ENCODE measurements at regions of chr5 and their contacts with region 1.

Region 1: GRCh38 chr5:148443998-148444397 is 60.2 kb downstream of the FBXO38 start:
- DNase-seq: peak; percentile 87
- H3K4me3 Mint-ChIP-seq: no peak overlapping the region
- H3K27ac Mint-ChIP-seq: no peak overlapping the region
- H3K4me1 Mint-ChIP-seq: no peaks in the 10 kb centered on the region
- H3K27me3 Mint-ChIP-seq: no peaks in the 10 kb centered on the region
- CTCF ChIP-seq: peak; percentile 74

Region 2: GRCh38 chr5:147148715-147149114 is 1295.3 kb before region 1 on chr5:
- CTCF ChIA-PET with region 1: no interaction called
- POLR2A ChIA-PET with region 1: no interaction called
- intact Hi-C with region 1: no loop called
- DNase-seq: no peak
- H3K4me3 Mint-ChIP-seq: no peak overlapping the region
- H3K27ac Mint-ChIP-seq: no peak overlapping the region
- H3K4me1 Mint-ChIP-seq: no peaks in the 10 kb centered on the region
- H3K27me3 Mint-ChIP-seq: no peaks in the 10 kb centered on the region
- CTCF ChIP-seq: no peak

Region 3: DNA sequence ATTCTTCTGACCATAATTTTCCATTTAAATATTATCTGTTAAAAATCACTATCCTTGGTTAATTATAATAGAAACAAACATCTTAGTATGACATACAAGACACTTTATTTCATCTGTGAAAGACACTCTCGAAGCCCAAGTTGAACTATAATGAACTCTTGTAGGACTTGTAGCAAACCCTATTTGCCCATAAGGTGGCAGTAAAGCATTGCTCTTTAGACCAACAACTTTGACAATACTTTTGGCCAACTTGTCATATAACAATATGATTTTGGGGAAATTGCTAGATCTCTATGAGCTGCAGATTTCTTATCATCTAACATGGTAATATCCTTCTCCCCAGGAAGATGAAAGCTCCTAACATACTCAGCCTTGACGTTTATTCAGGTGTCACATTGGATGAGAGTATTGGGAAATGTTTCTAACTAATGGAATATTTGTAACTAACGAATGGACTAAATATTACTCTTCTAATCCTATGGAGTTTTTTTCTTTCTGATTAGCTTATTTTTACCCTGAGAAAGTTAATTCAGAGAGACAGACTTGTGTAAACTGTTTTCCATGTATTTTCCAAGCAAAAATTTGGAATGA is 264.7 kb before region 1 on chr5:
- CTCF ChIA-PET with region 1: interaction called, 22 read pairs
- POLR2A ChIA-PET with region 1: interaction called, 3 read pairs
- intact Hi-C with region 1: loop called (anchors 1 kb)
- DNase-seq: peak; percentile 84
- H3K4me3 Mint-ChIP-seq: no peak overlapping the region
- H3K27ac Mint-ChIP-seq: no peak overlapping the region
- H3K4me1 Mint-ChIP-seq: no peaks in the 10 kb centered on the region
- H3K27me3 Mint-ChIP-seq: peaks cover 7% of the 10 kb centered on the region
- CTCF ChIP-seq: peak; percentile 94

Region 4: GRCh38 chr5:148408092-148408491 is 35.9 kb before region 1 on chr5:
- CTCF ChIA-PET with region 1: interaction called, 15 read pairs
- POLR2A ChIA-PET with region 1: no interaction called
- intact Hi-C with region 1: no loop called
- DNase-seq: no peak
- H3K4me3 Mint-ChIP-seq: no peak overlapping the region
- H3K27ac Mint-ChIP-seq: no peak overlapping the region
- H3K4me1 Mint-ChIP-seq: peaks cover 9% of the 10 kb centered on the region
- H3K27me3 Mint-ChIP-seq: no peaks in the 10 kb centered on the region
- CTCF ChIP-seq: no peak

Region 5: DNA sequence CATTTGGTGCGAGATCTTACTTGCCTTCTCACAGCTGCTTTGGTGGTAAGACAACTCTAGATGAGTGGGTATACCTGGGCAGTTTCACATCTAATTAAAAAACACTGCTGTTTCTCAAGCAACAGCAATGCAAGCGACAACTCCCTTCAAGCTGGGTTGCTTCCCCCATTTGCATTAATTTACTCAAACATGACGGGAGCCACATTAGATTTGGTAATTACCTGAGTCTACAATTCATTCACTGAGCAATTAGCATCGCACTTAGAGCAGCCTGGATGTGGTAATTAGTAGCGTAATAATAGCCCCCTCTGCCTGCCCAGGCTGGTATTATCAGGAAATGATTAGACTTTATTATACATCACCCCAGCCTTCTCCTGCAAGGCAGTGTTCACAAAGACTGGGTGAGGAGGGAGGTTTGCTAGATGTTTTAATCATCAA is 13.2 kb after region 1 on chr5:
- CTCF ChIA-PET with region 1: interaction called, 29 read pairs
- POLR2A ChIA-PET with region 1: interaction called, 3 read pairs
- intact Hi-C with region 1: no loop called
- DNase-seq: peak; percentile 60
- H3K4me3 Mint-ChIP-seq: no peak overlapping the region
- H3K27ac Mint-ChIP-seq: no peak overlapping the region
- H3K4me1 Mint-ChIP-seq: no peaks in the 10 kb centered on the region
- H3K27me3 Mint-ChIP-seq: peaks cover 45% of the 10 kb centered on the region
- CTCF ChIP-seq: peak; percentile 52

Region 6: DNA sequence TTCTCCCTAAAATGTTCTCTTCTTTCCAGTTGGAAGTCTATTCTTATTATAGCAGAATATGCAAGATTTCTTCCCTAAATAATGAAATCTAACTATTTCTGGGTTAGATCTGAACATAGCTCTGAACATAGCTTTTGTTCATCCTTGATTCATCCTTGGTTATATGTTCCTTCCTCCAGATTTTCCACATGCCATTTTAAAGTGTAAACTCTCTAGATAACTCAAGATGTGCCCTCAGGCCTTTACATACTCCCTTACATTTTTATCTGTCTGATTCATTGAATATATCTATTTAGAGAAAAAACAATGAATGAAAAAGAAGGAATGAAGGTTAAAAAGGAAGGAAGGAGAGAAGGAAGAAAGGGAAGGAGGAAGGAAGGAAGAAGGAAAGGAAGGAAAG is 40.7 kb after region 1 on chr5:
- CTCF ChIA-PET with region 1: no interaction called
- POLR2A ChIA-PET with region 1: no interaction called
- intact Hi-C with region 1: no loop called
- DNase-seq: no peak
- H3K4me3 Mint-ChIP-seq: no peak overlapping the region
- H3K27ac Mint-ChIP-seq: no peak overlapping the region
- H3K4me1 Mint-ChIP-seq: peaks cover 10% of the 10 kb centered on the region
- H3K27me3 Mint-ChIP-seq: peaks cover 47% of the 10 kb centered on the region
- CTCF ChIP-seq: no peak

Region 7: GRCh38 chr5:148615644-148616275 is 171.8 kb after region 1 on chr5:
- CTCF ChIA-PET with region 1: no interaction called
- POLR2A ChIA-PET with region 1: no interaction called
- intact Hi-C with region 1: no loop called
- DNase-seq: peak; percentile 26
- H3K4me3 Mint-ChIP-seq: no peak overlapping the region
- H3K27ac Mint-ChIP-seq: no peak overlapping the region
- H3K4me1 Mint-ChIP-seq: peaks cover 6% of the 10 kb centered on the region
- H3K27me3 Mint-ChIP-seq: no peaks in the 10 kb centered on the region
- CTCF ChIP-seq: no peak

Region 8: DNA sequence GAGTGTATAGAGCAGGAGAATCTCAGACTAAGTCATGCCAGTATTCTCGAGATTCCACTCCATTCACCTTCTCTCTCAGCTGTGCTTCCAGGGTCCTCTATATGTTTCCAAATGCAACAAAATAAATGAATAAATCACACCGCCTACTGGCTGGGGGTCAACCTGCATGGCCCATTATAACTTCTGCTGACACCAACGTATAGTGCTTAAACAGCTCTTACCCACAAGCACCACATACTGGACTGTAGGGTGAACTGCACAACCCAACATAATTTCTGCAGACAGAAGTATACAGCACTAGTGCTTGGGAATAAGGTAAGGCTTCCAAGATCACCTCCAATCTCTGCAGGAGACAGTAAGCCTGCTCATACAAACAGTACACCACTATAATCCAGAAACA is 243.4 kb after region 1 on chr5:
- CTCF ChIA-PET with region 1: interaction called, 31 read pairs
- POLR2A ChIA-PET with region 1: no interaction called
- intact Hi-C with region 1: loop called (anchors 1 kb)
- DNase-seq: peak; percentile 78
- H3K4me3 Mint-ChIP-seq: no peak overlapping the region
- H3K27ac Mint-ChIP-seq: no peak overlapping the region
- H3K4me1 Mint-ChIP-seq: no peaks in the 10 kb centered on the region
- H3K27me3 Mint-ChIP-seq: peaks cover 21% of the 10 kb centered on the region
- CTCF ChIP-seq: peak; percentile 72

Region 9: DNA sequence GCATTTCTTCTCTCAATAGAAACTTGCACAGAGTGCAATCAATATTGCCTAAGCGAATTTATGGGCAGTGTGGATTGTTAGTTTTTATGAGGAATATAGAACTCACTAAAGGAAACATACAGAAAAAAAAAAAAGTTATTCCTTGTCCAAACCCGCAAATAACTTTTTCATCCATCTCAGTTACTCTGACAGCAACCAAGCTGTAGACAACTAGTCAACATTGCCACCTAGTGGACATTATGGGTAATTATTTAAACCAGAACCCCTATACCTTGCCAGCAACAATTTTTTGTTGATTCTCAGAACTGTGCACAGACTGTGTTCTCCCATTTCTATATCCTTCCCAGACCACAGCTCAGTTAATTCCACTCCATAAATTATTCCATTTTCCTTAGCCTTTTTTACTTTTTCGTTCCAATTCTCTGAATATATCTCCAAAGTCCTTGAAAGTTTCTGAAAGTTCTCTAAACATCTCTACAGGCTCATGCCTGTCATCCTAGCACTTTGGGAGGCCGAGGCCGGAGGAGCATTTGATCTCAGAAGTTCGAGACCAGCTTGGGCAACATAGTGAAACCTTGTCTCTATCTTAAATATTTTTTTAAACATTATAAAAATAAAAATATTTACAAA is 825.0 kb after region 1 on chr5:
- CTCF ChIA-PET with region 1: interaction called, 6 read pairs
- POLR2A ChIA-PET with region 1: no interaction called
- intact Hi-C with region 1: loop called (anchors 5 kb)
- DNase-seq: peak; percentile 84
- H3K4me3 Mint-ChIP-seq: no peak overlapping the region
- H3K27ac Mint-ChIP-seq: no peak overlapping the region
- H3K4me1 Mint-ChIP-seq: peaks cover 14% of the 10 kb centered on the region
- H3K27me3 Mint-ChIP-seq: no peaks in the 10 kb centered on the region
- CTCF ChIP-seq: peak; percentile 91